Esophagus squamous epithelium (tissue), 5 donors: ENCODE measurements at regions of chr13 and their contacts with region 1.

Region 1: DNA sequence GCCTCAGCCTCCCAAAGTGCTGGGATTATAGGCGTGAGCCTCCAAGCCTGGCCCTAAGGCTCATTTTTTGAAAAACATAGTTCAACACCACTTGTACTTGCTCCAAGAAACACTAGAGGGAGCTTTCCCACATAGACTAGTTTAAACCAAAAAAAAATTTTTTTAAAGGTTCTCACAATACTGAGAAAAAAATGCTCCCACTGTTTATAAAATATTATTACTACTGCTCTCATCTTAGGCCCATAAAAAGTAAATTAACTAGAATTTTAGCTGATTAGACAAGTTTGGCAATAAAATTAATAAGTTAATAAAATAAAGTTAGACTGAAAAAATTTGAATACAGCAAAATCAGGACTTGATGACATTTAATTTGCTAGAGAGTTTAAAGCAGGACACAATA is 109.5 kb downstream of the TBC1D4 start:
- DNase-seq: no peak
- H3K4me3 ChIP-seq: no peak overlapping the region
- H3K27ac ChIP-seq: no peak overlapping the region
- H3K4me1 ChIP-seq: peaks cover 0 to 25% (median 8%) of the 10 kb centered on the region in 3 donors
- H3K27me3 ChIP-seq: no peaks in the 10 kb centered on the region
- CTCF ChIP-seq: peak in 5 of 6 experiments; percentile 53 to 77 (median 73)
- POLR2A ChIP-seq: no peak

Region 2: GRCh38 chr13:75482070-75482819 is 109.7 kb after region 1 on chr13 and contains the start of gene TBC1D4:
- intact Hi-C with region 1: loop called (anchors 5 kb)
- DNase-seq: peak; percentile 22
- H3K4me3 ChIP-seq: peak within 1 kb of the TSS; percentile 73 to 97 (median 86)
- H3K27ac ChIP-seq: peak within 1 kb of the TSS; percentile 79 to 85 (median 84)
- H3K4me1 ChIP-seq: peaks cover 0 to 43% (median 3%) of the 10 kb centered on the region in 3 donors
- H3K27me3 ChIP-seq: no peaks in the 10 kb centered on the region
- CTCF ChIP-seq: peak; percentile 69 to 82 (median 76)
- POLR2A ChIP-seq: no peak
- total RNA-seq, gene TBC1D4: 14.9 to 20.8 (median 16.6) TPM

Region 3: DNA sequence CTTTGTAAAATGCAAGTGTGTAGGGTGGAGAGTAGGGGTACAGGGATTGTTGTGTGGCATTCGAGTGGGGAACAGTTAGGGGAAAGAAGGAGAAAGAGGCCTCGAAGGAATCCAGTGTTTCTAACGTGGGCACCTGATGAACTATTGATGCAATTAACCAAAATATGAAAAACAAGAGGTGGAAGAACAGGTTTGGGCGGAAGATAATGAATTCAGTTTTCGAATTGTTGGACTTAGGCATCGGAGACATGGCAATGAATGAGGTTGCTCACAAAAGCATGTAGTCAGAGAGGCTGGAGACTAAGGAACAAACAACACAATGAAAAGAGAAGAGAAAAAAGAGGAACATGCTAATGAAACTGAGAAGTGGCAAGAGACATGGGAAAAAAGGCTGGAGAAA is 456.3 kb after region 1 on chr13:
- intact Hi-C with region 1: no loop called
- DNase-seq: no peak
- H3K4me3 ChIP-seq: no peak overlapping the region
- H3K27ac ChIP-seq: no peak overlapping the region
- H3K4me1 ChIP-seq: peaks cover 0 to 13% (median 0%) of the 10 kb centered on the region in 3 donors
- H3K27me3 ChIP-seq: no peaks in the 10 kb centered on the region
- CTCF ChIP-seq: no peak
- POLR2A ChIP-seq: no peak